ENCODE measurements at regions of chr1 and their contacts with region 1.

Region 1: DNA sequence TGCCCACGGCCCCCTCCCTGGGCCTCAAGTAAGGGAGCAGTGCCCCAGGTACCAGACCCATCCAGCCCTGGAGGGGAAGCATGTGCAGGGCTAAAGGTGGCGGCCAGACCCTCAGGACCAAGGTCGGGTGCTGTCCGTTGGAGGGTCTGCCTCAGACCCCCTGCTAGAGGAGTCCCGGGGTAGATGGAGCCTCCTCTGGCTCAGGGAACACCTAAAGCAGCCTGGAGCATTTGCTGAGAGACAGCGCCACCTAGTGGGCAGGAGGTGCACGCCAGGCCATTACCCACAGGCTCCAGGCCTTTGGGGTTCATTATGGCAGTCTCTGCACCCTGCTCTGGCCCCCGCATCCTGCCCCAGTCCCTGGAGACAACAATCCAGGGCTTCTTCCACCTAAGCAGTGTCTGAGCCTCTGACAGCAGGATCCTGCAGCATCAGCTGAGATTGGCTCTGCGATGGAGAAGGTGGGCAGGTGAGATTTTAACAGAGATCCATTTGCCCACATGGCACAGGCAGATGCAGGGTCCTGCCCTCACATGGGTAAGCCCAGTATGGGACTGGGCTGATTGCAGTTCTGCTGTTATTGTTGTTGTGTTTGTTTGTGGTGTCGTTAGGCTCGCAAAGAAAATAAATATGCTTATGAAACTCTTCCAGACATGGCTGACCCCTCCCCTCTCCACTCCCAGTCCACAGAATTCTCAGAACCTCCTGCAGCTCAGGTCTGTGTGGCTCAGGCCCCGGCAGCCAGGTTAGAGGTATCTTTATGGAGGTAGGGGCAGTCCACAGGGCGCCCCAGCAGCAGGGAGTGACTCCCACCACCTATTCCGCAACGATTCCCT is 42.4 kb downstream of the CTNNBIP1 start:
- DNase-seq: peak; percentile 36 to 76
- ATAC-seq: peak; percentile 71 to 85
- H3K4me3 ChIP-seq: no peak overlapping the region
- H3K27ac ChIP-seq: no peak overlapping the region
- H3K4me1 ChIP-seq: peaks cover 9 to 16% of the 10 kb centered on the region in 2 donors
- H3K27me3 ChIP-seq: no peaks in the 10 kb centered on the region
- CTCF ChIP-seq: peak; percentile 89 to 99 (median 98)
- POLR2A ChIP-seq: no peak

Region 2: GRCh38 chr1:9629445-9630201 is 238.0 kb before region 1 on chr1:
- in situ Hi-C with region 1: loop called in 3 of 4 experiments (anchors 5 to 10 kb)
- intact Hi-C with region 1: loop called (anchors 1 kb)
- DNase-seq: peak; percentile 39 to 42
- ATAC-seq: no peak
- H3K4me3 ChIP-seq: no peak overlapping the region
- H3K27ac ChIP-seq: no peak overlapping the region
- H3K4me1 ChIP-seq: peaks cover 0 to 5% of the 10 kb centered on the region in 2 donors
- H3K27me3 ChIP-seq: peaks cover 0 to 10% (median 0%) of the 10 kb centered on the region in 3 donors
- CTCF ChIP-seq: no peak
- POLR2A ChIP-seq: no peak

Region 3: GRCh38 chr1:9724706-9725476 is 142.7 kb before region 1 on chr1:
- in situ Hi-C with region 1: no loop called
- intact Hi-C with region 1: loop called (anchors 5 kb)
- DNase-seq: no peak
- ATAC-seq: peak in 1 of 2 donors; percentile 61
- H3K4me3 ChIP-seq: no peak overlapping the region
- H3K27ac ChIP-seq: no peak overlapping the region
- H3K4me1 ChIP-seq: no peaks in the 10 kb centered on the region
- H3K27me3 ChIP-seq: no peaks in the 10 kb centered on the region
- CTCF ChIP-seq: peak; percentile 45 to 77 (median 62)
- POLR2A ChIP-seq: no peak

Region 4: GRCh38 chr1:9784508-9785133 is 83.0 kb before region 1 on chr1:
- in situ Hi-C with region 1: loop called (anchors 5 to 10 kb)
- intact Hi-C with region 1: loop called (anchors 1 kb)
- DNase-seq: peak; percentile 27 to 31
- ATAC-seq: peak; percentile 30 to 66
- H3K4me3 ChIP-seq: no peak overlapping the region
- H3K27ac ChIP-seq: no peak overlapping the region
- H3K4me1 ChIP-seq: no peaks in the 10 kb centered on the region
- H3K27me3 ChIP-seq: no peaks in the 10 kb centered on the region
- CTCF ChIP-seq: peak; percentile 65 to 83 (median 71)
- POLR2A ChIP-seq: no peak

Region 5: DNA sequence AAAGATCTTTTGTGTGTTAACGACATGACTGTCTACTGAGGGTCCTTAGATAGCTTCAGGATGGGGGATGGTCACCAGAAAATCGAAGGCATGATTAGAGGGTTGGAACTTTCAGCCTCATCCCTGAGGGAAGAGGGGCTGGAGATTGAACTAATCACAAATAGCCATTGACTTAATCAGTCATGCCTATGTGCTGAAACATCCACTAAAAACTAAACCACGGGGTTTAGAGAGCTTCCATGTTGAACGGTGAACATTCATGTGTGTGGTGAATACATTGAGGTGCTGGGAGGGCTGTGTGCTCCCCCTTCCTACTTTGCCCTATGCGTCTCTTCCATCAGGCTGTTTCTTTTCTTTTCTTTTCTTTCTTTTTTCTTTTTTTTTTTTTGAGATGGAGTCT is 146.4 kb after region 1 on chr1:
- in situ Hi-C with region 1: no loop called
- intact Hi-C with region 1: no loop called
- DNase-seq: no peak
- ATAC-seq: no peak
- H3K4me3 ChIP-seq: no peak overlapping the region
- H3K27ac ChIP-seq: no peak overlapping the region
- H3K4me1 ChIP-seq: no peaks in the 10 kb centered on the region
- H3K27me3 ChIP-seq: no peaks in the 10 kb centered on the region
- CTCF ChIP-seq: no peak
- POLR2A ChIP-seq: no peak

Measured in gastrocnemius medialis (tissue), 4 donors.